ENCODE measurements at regions of chr9 and their contacts with region 1.

Region 1: DNA sequence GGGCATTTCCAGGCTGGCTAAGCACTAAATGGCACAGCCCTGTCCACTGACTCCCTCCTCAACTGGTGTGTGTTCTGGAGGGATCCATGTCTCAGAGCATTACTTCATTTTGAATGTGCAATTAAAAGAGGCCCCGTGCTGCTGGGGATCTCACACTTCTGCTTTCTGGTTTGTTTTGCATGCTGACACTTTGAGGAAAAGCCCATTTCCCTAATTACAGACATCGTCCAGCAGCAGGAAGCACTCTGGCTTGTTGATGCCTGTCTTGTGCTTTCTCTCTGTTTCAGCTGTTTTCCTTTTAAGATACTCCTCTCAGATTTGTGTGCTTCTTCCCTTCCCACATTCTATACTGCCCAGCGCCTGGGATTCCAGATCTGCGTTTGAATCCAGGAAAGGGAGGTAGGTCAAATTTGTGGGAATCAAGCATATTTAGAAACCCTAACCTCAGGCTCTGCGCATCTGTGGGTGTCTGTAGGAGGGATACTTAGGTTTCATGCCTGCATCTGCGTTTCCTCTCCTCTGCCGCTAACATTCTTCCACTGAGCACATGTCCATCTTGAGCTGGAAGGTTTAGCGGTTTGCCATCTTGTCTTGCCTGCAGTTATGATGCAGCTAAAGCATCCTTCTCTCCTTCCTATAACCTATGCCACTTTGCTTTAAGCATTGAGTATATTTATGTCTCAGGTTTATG is 25.7 kb downstream of the SYK start:
- DNase-seq: no peak
- ATAC-seq: peak; percentile 64
- H3K4me3 Mint-ChIP-seq: peak overlapping the region; percentile 87
- H3K27ac Mint-ChIP-seq: peak overlapping the region; percentile 96
- H3K4me1 Mint-ChIP-seq: peaks cover 95% of the 10 kb centered on the region
- H3K27me3 Mint-ChIP-seq: no peaks in the 10 kb centered on the region
- CTCF ChIP-seq: no peak

Region 2: DNA sequence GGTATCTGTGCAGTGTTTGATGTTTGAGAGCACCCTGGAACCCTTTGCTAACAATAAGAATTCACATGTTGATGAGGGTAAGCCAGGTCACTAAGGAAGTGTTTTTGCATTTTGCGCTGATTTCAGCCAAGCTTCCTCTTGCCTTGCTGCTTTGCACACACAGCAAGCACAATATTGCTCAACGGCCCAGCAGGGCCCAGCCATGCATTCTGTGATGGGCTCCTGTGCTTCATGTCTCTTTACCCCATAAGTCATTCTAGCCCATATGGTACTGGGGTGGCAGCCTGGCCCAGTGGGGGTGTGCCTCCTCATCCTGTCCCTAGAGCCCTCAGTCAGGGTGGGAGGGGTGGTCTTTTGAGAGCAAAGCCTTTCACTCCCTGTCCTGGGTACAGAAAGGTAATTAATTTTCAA is 741.2 kb before region 1 on chr9:
- CTCF ChIA-PET with region 1: no interaction called
- POLR2A ChIA-PET with region 1: no interaction called
- intact Hi-C with region 1: no loop called
- DNase-seq: no peak
- ATAC-seq: no peak
- H3K4me3 Mint-ChIP-seq: no peak overlapping the region
- H3K27ac Mint-ChIP-seq: no peak overlapping the region
- H3K4me1 Mint-ChIP-seq: peaks cover 11% of the 10 kb centered on the region
- H3K27me3 Mint-ChIP-seq: peaks cover 2% of the 10 kb centered on the region
- CTCF ChIP-seq: no peak

Region 3: GRCh38 chr9:90787771-90788460 is 39.4 kb before region 1 on chr9:
- CTCF ChIA-PET with region 1: no interaction called
- POLR2A ChIA-PET with region 1: interaction called, 10 read pairs
- intact Hi-C with region 1: loop called (anchors 5 kb)
- DNase-seq: no peak
- ATAC-seq: peak; percentile 53
- H3K4me3 Mint-ChIP-seq: no peak overlapping the region
- H3K27ac Mint-ChIP-seq: peak overlapping the region; percentile 66
- H3K4me1 Mint-ChIP-seq: peaks cover 42% of the 10 kb centered on the region
- H3K27me3 Mint-ChIP-seq: no peaks in the 10 kb centered on the region
- CTCF ChIP-seq: no peak

Region 4: DNA sequence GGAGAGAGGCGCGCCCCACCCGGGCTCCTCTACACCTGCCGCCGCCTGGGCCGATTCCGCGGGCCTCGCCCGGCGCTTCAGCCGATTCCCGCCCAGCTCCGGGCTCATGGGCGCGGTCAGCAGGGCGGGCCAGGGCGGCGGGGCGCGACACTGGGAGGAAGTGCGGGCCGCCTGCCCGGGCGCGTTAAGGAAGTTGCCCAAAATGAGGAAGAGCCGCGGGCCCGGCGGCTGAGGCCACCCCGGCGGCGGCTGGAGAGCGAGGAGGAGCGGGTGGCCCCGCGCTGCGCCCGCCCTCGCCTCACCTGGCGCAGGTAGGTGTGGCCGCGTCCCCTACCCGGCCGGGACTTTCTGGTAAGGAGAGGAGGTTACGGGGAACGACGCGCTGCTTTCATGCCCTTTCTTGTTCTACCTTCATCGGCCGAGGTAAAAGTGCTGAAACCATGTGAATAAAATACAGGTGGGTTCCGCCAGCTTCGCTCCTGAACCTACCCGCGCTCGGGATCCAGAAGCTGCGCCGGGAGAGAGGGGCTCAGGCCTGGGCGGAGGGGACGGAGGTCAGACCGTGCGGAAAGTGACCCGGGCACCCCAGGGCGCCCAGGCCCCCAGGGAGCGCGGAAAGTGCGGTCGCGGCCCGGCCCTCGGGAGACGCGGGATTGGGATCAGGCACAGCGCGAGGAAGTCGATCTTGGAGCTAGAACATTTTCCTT is 25.6 kb before region 1 on chr9 and contains the start of gene SYK:
- CTCF ChIA-PET with region 1: interaction called, 3 read pairs
- POLR2A ChIA-PET with region 1: interaction called, 102 read pairs
- intact Hi-C with region 1: loop called (anchors 1 kb)
- DNase-seq: peak; percentile 72
- ATAC-seq: peak; percentile 77
- H3K4me3 Mint-ChIP-seq: peak within 1 kb of the TSS; percentile 94
- H3K27ac Mint-ChIP-seq: peak within 1 kb of the TSS; percentile 94
- H3K4me1 Mint-ChIP-seq: peaks cover 74% of the 10 kb centered on the region
- H3K27me3 Mint-ChIP-seq: no peaks in the 10 kb centered on the region
- CTCF ChIP-seq: no peak
- total RNA-seq, gene SYK: 222 and 237 TPM in 2 replicates

Region 5: GRCh38 chr9:90815183-90815943 is 12.0 kb before region 1 on chr9:
- CTCF ChIA-PET with region 1: interaction called, 14 read pairs
- POLR2A ChIA-PET with region 1: interaction called, 52 read pairs
- intact Hi-C with region 1: loop called (anchors 1 kb)
- DNase-seq: peak; percentile 47
- ATAC-seq: peak; percentile 72
- H3K4me3 Mint-ChIP-seq: peak overlapping the region; percentile 73
- H3K27ac Mint-ChIP-seq: peak overlapping the region; percentile 95
- H3K4me1 Mint-ChIP-seq: peaks cover 94% of the 10 kb centered on the region
- H3K27me3 Mint-ChIP-seq: no peaks in the 10 kb centered on the region
- CTCF ChIP-seq: no peak

Region 6: DNA sequence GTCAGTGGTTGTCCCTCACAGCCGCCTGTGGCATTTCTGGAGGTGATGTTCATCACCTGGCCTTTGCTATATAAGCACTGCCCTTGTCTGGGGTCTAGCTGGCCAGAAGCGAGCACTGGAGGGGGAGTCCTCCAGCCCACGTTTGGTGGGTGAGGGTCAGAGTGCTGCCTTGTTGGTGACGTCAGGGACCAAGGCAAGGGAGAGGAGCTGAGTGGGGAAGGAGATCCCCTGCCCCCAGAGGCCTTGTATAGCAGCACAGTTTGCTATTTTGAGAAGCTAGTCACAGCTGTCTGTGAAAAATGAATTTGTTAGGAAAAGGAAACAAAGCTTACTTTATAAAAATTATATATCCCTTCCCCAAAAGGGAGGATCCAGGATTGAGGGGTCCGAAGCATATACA is 24.1 kb after region 1 on chr9:
- CTCF ChIA-PET with region 1: no interaction called
- POLR2A ChIA-PET with region 1: no interaction called
- intact Hi-C with region 1: no loop called
- DNase-seq: no peak
- ATAC-seq: no peak
- H3K4me3 Mint-ChIP-seq: no peak overlapping the region
- H3K27ac Mint-ChIP-seq: no peak overlapping the region
- H3K4me1 Mint-ChIP-seq: peaks cover 19% of the 10 kb centered on the region
- H3K27me3 Mint-ChIP-seq: no peaks in the 10 kb centered on the region
- CTCF ChIP-seq: no peak

Region 7: DNA sequence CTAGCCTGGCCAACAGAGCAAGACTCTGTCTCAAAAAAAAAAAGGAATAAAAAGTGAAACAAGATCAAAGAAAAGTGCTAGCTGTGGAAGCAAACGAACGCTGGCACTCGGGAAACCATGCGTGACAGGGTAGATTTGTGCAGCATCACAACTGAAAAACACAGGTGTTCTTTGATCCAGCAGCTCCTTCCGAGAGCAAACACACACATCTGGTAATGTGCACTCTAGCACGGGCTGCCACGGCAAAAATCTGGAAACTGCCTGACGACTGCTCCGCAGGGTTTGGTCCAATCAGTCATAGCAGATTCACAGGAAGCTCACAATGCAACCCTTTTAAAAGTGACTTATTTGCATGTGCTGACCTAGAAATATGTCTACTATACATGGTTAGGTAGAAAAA is 54.3 kb after region 1 on chr9:
- CTCF ChIA-PET with region 1: no interaction called
- POLR2A ChIA-PET with region 1: interaction called, 3 read pairs
- intact Hi-C with region 1: loop called (anchors 2 kb)
- DNase-seq: peak; percentile 30
- ATAC-seq: peak; percentile 66
- H3K4me3 Mint-ChIP-seq: no peak overlapping the region
- H3K27ac Mint-ChIP-seq: peak overlapping the region; percentile 92
- H3K4me1 Mint-ChIP-seq: peaks cover 41% of the 10 kb centered on the region
- H3K27me3 Mint-ChIP-seq: no peaks in the 10 kb centered on the region
- CTCF ChIP-seq: no peak

Region 8: GRCh38 chr9:91098213-91098850 is 271.0 kb after region 1 on chr9:
- CTCF ChIA-PET with region 1: no interaction called
- POLR2A ChIA-PET with region 1: no interaction called
- intact Hi-C with region 1: no loop called
- DNase-seq: no peak
- ATAC-seq: no peak
- H3K4me3 Mint-ChIP-seq: no peak overlapping the region
- H3K27ac Mint-ChIP-seq: no peak overlapping the region
- H3K4me1 Mint-ChIP-seq: peaks cover 20% of the 10 kb centered on the region
- H3K27me3 Mint-ChIP-seq: peaks cover 7% of the 10 kb centered on the region
- CTCF ChIP-seq: no peak

Region 9: GRCh38 chr9:91221332-91221731 is 394.0 kb after region 1 on chr9:
- CTCF ChIA-PET with region 1: no interaction called
- POLR2A ChIA-PET with region 1: no interaction called
- intact Hi-C with region 1: no loop called
- DNase-seq: no peak
- ATAC-seq: no peak
- H3K4me3 Mint-ChIP-seq: no peak overlapping the region
- H3K27ac Mint-ChIP-seq: no peak overlapping the region
- H3K4me1 Mint-ChIP-seq: no peaks in the 10 kb centered on the region
- H3K27me3 Mint-ChIP-seq: no peaks in the 10 kb centered on the region
- CTCF ChIP-seq: no peak

Measured in activated B cell treated with CpG ODN at 0.5 μM for 24 hours (primary cell).